ENCODE measurements at regions of chr17 and their contacts with region 1.

Region 1: DNA sequence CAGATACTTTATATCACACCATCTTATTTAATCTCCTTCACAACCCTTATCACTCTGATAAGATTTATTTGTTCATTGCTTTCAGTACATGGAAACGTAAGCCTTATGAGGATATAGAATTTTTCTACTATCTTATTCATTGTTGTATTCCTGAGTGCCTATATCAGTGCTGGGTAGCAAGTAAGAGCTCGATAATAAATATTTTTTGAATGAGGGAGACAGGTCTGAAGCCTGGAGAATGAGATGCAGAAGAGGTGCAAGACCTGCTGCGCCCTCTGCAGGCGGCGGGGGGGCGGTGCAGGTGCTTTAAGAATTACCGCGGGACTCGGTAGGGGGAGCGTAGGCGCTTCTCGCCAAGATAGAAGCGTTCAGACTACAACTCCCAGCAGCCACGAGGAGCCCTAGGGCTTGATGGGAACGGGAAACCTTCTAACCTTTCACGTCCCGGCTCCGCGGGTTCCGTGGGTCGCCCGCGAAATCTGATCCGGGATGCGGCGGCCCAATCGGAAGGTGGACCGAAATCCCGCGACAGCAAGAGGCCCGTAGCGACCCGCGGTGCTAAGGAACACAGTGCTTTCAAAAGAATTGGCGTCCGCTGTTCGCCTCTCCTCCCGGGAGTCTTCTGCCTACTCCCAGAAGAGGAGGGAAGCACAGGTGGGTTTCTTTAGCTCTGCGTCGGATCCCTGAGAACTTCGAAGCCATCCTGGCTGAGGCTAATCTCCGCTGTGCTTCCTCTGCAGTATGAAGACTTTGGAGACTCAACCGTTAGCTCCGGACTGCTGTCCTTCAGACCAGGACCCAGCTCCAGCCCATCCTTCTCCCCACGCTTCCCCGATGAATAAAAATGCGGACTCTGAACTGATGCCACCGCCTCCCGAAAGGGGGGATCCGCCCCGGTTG is at the start of gene WRAP53:
- DNase-seq: peak; percentile 93 to 97 (median 96)
- ATAC-seq: peak; percentile 89
- H3K4me3 ChIP-seq: peak within 1 kb of the TSS; percentile 96
- H3K4me3 Mint-ChIP-seq: peak within 1 kb of the TSS; percentile 95 to 99 (median 97)
- H3K27ac ChIP-seq: peak within 1 kb of the TSS; percentile 96
- H3K27ac Mint-ChIP-seq: peak within 1 kb of the TSS; percentile 99 to 100 (median 100)
- H3K4me1 ChIP-seq: peaks cover 28 to 31% of the 10 kb centered on the region in 2 donors
- H3K4me1 Mint-ChIP-seq: peaks cover 31 to 47% (median 41%) of the 10 kb centered on the region in 7 donors
- H3K27me3 ChIP-seq: no peaks in the 10 kb centered on the region
- H3K27me3 Mint-ChIP-seq: no peaks in the 10 kb centered on the region
- total RNA-seq, gene WRAP53: 6.7 to 21.1 (median 9.6) TPM

Region 2: GRCh38 chr17:7045909-7046724 is 642.0 kb before region 1 on chr17:
- CTCF ChIA-PET with region 1: no interaction called
- POLR2A ChIA-PET with region 1: interaction called, 16 read pairs
- intact Hi-C with region 1: no loop called
- DNase-seq: peak in 8 of 9 donors; percentile 48 to 79 (median 69)
- ATAC-seq: peak; percentile 58
- H3K4me3 ChIP-seq: peak overlapping the region; percentile 66
- H3K4me3 Mint-ChIP-seq: peak overlapping the region; percentile 78 to 91 (median 86)
- H3K27ac ChIP-seq: peak overlapping the region; percentile 74
- H3K27ac Mint-ChIP-seq: peak overlapping the region; percentile 69 to 96 (median 92)
- H3K4me1 ChIP-seq: peaks cover 27 to 30% of the 10 kb centered on the region in 2 donors
- H3K4me1 Mint-ChIP-seq: peaks cover 0 to 53% (median 36%) of the 10 kb centered on the region in 7 donors
- H3K27me3 ChIP-seq: no peaks in the 10 kb centered on the region
- H3K27me3 Mint-ChIP-seq: peaks cover 0 to 36% (median 0%) of the 10 kb centered on the region in 5 donors

Region 3: DNA sequence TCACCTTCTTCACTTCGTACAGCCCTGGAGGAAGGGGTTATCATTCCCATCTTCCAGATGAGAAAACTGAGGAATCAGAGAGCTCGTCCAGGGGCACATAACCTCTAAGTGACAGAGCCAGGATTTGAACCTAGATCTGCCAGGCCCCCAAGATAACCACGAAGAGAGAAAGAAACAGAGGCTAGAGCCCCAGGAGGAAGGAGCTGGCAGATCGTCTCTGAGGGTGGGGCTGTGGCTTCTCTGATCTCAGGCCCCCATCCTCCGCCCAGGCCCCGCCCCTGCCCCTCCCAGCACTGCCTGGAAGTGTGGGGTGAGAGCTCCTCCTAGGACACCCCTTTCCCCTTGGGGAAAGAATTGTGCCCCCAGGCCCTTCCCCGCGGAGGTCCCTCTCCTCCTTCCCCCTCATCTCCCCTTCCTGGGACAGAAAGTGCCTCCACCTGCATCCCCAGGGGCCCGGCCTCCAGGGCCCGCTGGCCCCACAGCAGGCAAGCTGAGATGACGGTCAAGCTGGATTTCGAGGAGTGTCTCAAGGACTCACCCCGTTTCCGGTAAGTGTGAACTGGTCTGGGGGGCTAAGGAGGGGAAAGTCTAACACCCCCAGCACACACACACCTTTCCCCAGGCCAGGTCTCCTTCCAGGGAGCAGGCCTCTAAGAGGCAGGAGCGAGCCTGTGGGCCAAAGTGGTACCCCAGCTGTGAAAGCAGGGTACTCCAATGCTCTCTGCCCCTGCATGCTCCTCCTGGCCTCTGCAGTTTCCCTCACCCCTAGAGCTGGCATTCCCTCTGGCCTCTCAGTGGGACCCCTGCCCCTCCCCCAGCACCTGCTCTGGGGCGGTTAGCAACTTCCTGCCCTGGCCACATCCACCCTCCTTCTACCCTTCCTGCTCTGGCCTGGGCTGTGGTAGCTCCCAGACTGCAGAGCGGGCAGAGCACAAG is 351.6 kb before region 1 on chr17 and contains the start of gene ACAP1:
- CTCF ChIA-PET with region 1: no interaction called
- POLR2A ChIA-PET with region 1: interaction called, 10 read pairs
- intact Hi-C with region 1: no loop called
- DNase-seq: peak; percentile 56 to 85 (median 82)
- ATAC-seq: peak; percentile 99
- H3K4me3 ChIP-seq: peak within 1 kb of the TSS; percentile 99
- H3K4me3 Mint-ChIP-seq: peak within 1 kb of the TSS; percentile 89 to 99 (median 94)
- H3K27ac ChIP-seq: peak within 1 kb of the TSS; percentile 81
- H3K27ac Mint-ChIP-seq: peak within 1 kb of the TSS; percentile 89 to 100 (median 95)
- H3K4me1 ChIP-seq: peaks cover 31 to 44% of the 10 kb centered on the region in 2 donors
- H3K4me1 Mint-ChIP-seq: peaks cover 49 to 76% (median 60%) of the 10 kb centered on the region in 7 donors
- H3K27me3 ChIP-seq: no peaks in the 10 kb centered on the region
- H3K27me3 Mint-ChIP-seq: no peaks in the 10 kb centered on the region
- total RNA-seq, gene ACAP1: 482 to 708 (median 599) TPM

Region 4: DNA sequence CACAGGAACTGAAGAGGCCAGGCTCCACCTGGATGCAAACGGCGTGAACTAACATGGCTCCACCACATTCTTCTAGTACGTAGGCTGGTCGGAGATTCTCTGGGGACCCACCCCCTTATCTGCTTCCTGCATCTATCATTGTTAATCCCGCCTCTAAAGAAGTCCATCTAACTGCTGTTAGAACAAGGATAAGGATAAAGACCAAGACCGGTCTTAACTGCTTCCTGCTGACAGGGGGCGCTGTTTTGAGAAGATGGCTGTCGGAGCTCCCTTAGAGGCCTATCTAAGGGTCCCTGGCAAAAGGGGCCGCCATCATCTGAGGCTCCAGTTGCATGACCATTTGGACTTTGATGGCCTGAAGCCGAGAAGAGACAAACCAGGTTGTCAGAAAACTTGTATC is 165.1 kb before region 1 on chr17:
- CTCF ChIA-PET with region 1: no interaction called
- POLR2A ChIA-PET with region 1: no interaction called
- intact Hi-C with region 1: loop called in 1 of 2 experiments (anchors 1 kb)
- DNase-seq: peak in 8 of 9 donors; percentile 34 to 58 (median 48)
- ATAC-seq: peak; percentile 64
- H3K4me3 ChIP-seq: no peak overlapping the region
- H3K4me3 Mint-ChIP-seq: no peak overlapping the region
- H3K27ac ChIP-seq: no peak overlapping the region
- H3K27ac Mint-ChIP-seq: peak overlapping the region in 4 of 9 donors; percentile 42 to 84 (median 51)
- H3K4me1 ChIP-seq: no peaks in the 10 kb centered on the region
- H3K4me1 Mint-ChIP-seq: peaks cover 3 to 6% (median 5%) of the 10 kb centered on the region in 7 donors
- H3K27me3 ChIP-seq: no peaks in the 10 kb centered on the region
- H3K27me3 Mint-ChIP-seq: peaks cover 0 to 2% (median 0%) of the 10 kb centered on the region in 5 donors

Region 5: DNA sequence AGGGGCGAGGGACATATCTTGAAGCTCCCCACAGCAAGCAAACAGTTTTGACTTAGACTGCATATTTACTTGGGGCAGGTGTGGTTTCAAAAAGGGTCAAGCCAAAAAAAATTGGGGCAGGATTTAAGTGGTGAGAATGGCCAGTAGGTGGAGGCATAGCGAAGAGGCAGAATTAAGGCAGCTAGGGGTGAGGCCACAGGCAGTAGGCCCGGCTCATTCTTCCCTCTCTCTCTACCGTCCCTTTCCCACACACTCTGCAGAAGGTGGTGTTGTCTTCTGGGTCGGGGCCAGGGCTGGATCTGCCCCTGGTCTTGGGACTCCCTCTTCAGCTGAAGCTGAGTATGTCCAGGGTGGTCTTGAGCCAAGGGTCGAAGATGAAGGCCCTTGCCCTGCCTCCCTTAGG is 55.7 kb before region 1 on chr17:
- CTCF ChIA-PET with region 1: interaction called, 25 read pairs
- POLR2A ChIA-PET with region 1: interaction called, 76 read pairs
- intact Hi-C with region 1: loop called (anchors 1 kb)
- DNase-seq: peak in 4 of 9 donors; percentile 11 to 39 (median 28)
- ATAC-seq: peak; percentile 54
- H3K4me3 ChIP-seq: no peak overlapping the region
- H3K4me3 Mint-ChIP-seq: peak overlapping the region in 1 of 10 donors; percentile 30
- H3K27ac ChIP-seq: no peak overlapping the region
- H3K27ac Mint-ChIP-seq: peak overlapping the region in 1 of 9 donors; percentile 48
- H3K4me1 ChIP-seq: no peaks in the 10 kb centered on the region
- H3K4me1 Mint-ChIP-seq: peaks cover 0 to 7% (median 4%) of the 10 kb centered on the region in 7 donors
- H3K27me3 ChIP-seq: no peaks in the 10 kb centered on the region
- H3K27me3 Mint-ChIP-seq: peaks cover 0 to 2% (median 0%) of the 10 kb centered on the region in 5 donors

Region 6: DNA sequence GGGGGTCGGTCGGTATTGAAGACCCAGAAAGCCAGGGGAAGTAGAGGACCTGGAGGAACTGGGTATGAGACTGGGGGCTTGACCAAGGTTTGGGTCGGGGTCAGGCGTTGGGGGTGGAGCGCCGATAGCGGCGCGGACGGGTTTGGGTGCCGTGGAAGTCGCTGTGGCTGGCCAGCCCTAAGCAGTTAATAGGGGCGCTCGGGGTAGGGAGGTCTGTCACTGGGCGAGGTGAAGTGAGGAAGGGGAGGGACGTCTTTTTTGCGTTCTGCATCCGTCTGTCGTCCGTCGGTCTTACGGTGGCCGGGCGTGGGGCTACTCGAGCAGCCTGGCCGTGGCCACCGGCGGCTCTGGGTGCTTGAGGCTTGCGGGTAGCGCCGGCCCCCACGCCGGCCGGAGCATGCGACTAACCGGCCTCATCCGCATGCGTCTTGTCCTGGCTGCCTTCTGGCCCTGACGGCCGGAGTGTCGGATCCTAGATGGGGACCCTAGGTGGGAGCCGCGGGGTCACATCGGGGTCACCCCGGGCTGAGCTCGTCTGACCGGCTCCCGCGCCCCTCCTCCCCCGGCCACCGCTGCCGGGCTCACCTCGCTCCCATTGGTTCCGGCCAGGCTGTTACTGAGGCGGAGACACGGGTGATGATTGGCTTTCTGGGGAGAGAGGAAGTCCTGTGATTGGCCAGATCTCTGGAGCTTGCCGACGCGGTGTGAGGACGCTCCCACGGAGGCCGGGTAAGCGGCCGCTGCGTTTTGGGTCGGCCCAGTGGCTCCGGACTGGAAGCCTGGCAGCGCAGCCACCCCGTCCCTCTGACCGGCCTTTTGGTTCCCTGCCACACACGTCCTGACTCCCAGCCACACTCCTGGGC is 156.4 kb after region 1 on chr17:
- CTCF ChIA-PET with region 1: no interaction called
- POLR2A ChIA-PET with region 1: interaction called, 4 read pairs
- intact Hi-C with region 1: loop called in 1 of 2 experiments (anchors 2 kb)
- DNase-seq: peak; percentile 74 to 87 (median 79)
- ATAC-seq: peak; percentile 42
- H3K4me3 ChIP-seq: peak overlapping the region; percentile 84
- H3K4me3 Mint-ChIP-seq: peak overlapping the region; percentile 85 to 99 (median 94)
- H3K27ac ChIP-seq: peak overlapping the region; percentile 100
- H3K27ac Mint-ChIP-seq: peak overlapping the region; percentile 90 to 100 (median 99)
- H3K4me1 ChIP-seq: peaks cover 11 to 26% of the 10 kb centered on the region in 2 donors
- H3K4me1 Mint-ChIP-seq: peaks cover 19 to 41% (median 29%) of the 10 kb centered on the region in 7 donors
- H3K27me3 ChIP-seq: no peaks in the 10 kb centered on the region
- H3K27me3 Mint-ChIP-seq: peaks cover 0 to 2% (median 0%) of the 10 kb centered on the region in 5 donors

Region 7: GRCh38 chr17:8189711-8190477 is 501.7 kb after region 1 on chr17 and contains the start of gene BORCS6:
- CTCF ChIA-PET with region 1: no interaction called
- POLR2A ChIA-PET with region 1: interaction called, 3 read pairs
- intact Hi-C with region 1: loop called in 1 of 2 experiments (anchors 5 kb)
- DNase-seq: peak; percentile 76 to 97 (median 94)
- ATAC-seq: peak; percentile 81
- H3K4me3 ChIP-seq: peak within 1 kb of the TSS; percentile 91
- H3K4me3 Mint-ChIP-seq: peak within 1 kb of the TSS in 2 of 10 donors; percentile 15 to 49
- H3K27ac ChIP-seq: peak within 1 kb of the TSS; percentile 87
- H3K27ac Mint-ChIP-seq: peak within 1 kb of the TSS in 7 of 9 donors; percentile 46 to 94 (median 88)
- H3K4me1 ChIP-seq: peaks cover 33 to 38% of the 10 kb centered on the region in 2 donors
- H3K4me1 Mint-ChIP-seq: peaks cover 8 to 13% (median 13%) of the 10 kb centered on the region in 7 donors
- H3K27me3 ChIP-seq: no peaks in the 10 kb centered on the region
- H3K27me3 Mint-ChIP-seq: no peaks in the 10 kb centered on the region
- total RNA-seq, gene BORCS6: 5.4 to 16.1 (median 13.4) TPM